GM23248 (cell line): ENCODE measurements at regions of chr15 and their contacts with region 1.

Region 1: GRCh38 chr15:100873029-100873677 is 6.5 kb upstream of the ALDH1A3 start:
- DNase-seq: peak; percentile 90
- H3K4me3 ChIP-seq: no peak overlapping the region
- H3K27ac ChIP-seq: no peak overlapping the region
- H3K4me1 ChIP-seq: no peaks in the 10 kb centered on the region
- H3K27me3 ChIP-seq: no peaks in the 10 kb centered on the region

Region 2: GRCh38 chr15:100663086-100663914 is 209.9 kb before region 1 on chr15:
- in situ Hi-C with region 1: loop called (anchors 10 kb)
- DNase-seq: peak; percentile 13
- H3K4me3 ChIP-seq: no peak overlapping the region
- H3K27ac ChIP-seq: no peak overlapping the region
- H3K4me1 ChIP-seq: peaks cover 8% of the 10 kb centered on the region; the same call in 1 of the 2 replicates
- H3K27me3 ChIP-seq: no peaks in the 10 kb centered on the region